Lower leg skin (tissue), 4 donors: ENCODE measurements at regions of chr12 and their contacts with region 1.

Region 1: DNA sequence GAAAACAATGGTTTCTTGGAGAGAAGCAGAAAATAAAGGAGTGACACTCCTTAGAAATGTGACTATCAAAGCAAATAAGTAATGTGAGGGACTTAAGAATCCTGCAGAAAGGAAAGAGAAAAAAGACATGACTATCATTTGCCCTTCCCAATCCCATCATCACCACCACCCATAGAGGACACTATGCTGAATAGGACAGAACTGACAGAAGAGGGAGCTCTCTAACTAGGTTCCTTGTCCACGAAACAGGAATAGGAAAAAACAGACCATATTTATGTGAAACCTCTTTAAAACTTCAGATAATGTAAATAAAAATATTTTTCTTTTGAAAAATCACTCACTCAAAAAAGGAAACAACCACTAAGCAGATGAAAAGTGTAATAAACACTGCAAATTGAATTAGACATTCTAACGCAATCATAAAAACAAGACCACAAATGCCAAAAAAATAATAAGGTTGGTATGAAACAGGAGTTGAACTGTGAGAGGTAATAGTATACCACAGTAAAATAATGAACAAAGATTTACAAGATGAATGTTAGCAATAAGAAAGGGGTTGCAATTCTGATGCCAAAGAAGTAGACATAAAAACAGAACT is 24.1 kb downstream of the KLRD1 start:
- DNase-seq: no peak
- H3K4me3 ChIP-seq: no peak overlapping the region
- CTCF ChIP-seq: peak in 1 of 3 donors; percentile 40
- POLR2A ChIP-seq: no peak

Region 2: GRCh38 chr12:10453144-10453543 is 121.4 kb after region 1 on chr12 and contains the start of gene KLRC1:
- intact Hi-C with region 1: no loop called
- DNase-seq: no peak
- H3K4me3 ChIP-seq: no peak within 1 kb of the TSS
- CTCF ChIP-seq: no peak
- POLR2A ChIP-seq: no peak
- total RNA-seq, gene KLRC1: not detected

Region 3: GRCh38 chr12:10562306-10562933 is 230.7 kb after region 1 on chr12:
- intact Hi-C with region 1: loop called (anchors 5 kb)
- DNase-seq: no peak
- H3K4me3 ChIP-seq: no peak overlapping the region
- CTCF ChIP-seq: peak in 1 of 3 donors; percentile 52
- POLR2A ChIP-seq: no peak